ENCODE measurements at regions of chr6 and their contacts with region 1.

Region 1: GRCh38 chr6:32700391-32701040 is 34.1 kb upstream of the HLA-DQB1 start:
- DNase-seq: peak; percentile 18
- ATAC-seq: peak; percentile 78 to 81

Region 2: DNA sequence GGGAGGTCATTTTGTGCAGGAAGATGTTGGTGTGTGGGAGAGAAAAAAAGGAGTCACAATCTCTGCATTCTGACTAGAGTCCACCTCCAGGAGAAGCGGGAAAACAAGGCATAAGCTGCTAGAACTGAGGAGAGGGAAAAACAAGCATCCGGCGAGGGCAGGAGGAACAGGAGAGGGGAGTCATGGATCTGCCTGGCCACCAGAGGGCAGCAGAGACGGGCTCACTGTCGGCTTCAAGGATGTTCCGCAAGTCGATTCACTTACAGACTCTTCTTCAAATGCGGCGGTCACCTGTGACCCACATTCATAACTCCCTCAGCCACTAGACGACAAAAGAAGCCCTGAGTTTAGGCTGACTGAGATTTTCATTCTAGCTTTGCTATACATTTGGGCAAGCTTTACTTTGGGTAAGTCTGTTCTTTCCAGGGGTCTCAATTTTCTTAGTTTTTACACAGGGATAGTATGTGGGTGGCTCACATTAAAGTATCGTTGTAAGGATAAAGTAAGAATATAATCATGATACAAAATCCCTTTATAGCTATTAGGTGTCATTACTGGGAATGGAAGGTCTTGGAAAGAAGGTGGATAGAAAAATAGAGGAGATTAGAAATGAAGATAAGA is 287.0 kb before region 1 on chr6:
- intact Hi-C with region 1: loop called (anchors 2 to 5 kb)
- DNase-seq: peak; percentile 75
- ATAC-seq: peak; percentile 84

Region 3: GRCh38 chr6:32432050-32432450 is 268.5 kb before region 1 on chr6:
- intact Hi-C with region 1: loop called (anchors 5 kb)
- DNase-seq: no peak
- ATAC-seq: no peak

Region 4: GRCh38 chr6:32488083-32488482 is 212.4 kb before region 1 on chr6:
- intact Hi-C with region 1: no loop called
- DNase-seq: no peak
- ATAC-seq: peak; percentile 47 to 55

Region 5: DNA sequence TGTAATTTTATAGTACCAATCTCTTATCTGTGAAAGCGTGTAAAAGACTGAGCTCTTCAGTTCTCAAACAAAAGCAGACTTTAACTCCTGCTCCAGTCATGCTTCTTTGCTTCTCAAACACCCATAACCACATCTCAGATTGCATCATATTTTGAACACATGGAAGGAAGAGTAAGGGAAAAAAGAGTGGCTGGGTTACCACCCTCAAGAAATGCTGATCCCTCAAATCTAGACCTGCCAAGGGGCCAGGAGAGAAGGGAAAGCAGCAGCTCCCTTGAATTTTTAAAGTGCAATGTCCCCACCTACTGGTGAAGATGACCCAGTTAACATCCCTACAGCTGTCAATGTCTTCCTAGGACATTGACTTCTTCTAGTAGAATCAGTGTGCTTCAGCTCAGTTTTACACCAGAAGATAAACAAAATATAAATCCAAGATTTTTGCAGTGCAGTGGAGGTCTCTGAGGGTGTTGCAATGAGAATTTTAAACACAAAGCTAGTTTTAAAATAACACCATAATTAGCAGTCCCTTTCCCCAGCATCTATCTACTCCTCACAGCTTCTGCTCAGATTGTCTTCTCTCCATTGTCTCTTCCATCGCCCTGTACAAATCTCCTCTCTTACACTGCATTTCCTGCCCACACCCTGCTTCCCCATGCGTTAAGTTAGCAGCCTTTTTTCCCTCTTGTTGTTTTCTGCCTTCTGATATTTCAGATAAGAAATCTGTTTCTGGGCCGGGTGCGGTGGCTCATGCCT is 85.4 kb after region 1 on chr6:
- intact Hi-C with region 1: loop called in 1 of 2 experiments (anchors 5 kb)
- DNase-seq: no peak
- ATAC-seq: peak; percentile 86 to 90

Measured in left cardiac atrium (tissue), 4 donors.